ENCODE measurements at regions of chr5 and their contacts with region 1.

Region 1: DNA sequence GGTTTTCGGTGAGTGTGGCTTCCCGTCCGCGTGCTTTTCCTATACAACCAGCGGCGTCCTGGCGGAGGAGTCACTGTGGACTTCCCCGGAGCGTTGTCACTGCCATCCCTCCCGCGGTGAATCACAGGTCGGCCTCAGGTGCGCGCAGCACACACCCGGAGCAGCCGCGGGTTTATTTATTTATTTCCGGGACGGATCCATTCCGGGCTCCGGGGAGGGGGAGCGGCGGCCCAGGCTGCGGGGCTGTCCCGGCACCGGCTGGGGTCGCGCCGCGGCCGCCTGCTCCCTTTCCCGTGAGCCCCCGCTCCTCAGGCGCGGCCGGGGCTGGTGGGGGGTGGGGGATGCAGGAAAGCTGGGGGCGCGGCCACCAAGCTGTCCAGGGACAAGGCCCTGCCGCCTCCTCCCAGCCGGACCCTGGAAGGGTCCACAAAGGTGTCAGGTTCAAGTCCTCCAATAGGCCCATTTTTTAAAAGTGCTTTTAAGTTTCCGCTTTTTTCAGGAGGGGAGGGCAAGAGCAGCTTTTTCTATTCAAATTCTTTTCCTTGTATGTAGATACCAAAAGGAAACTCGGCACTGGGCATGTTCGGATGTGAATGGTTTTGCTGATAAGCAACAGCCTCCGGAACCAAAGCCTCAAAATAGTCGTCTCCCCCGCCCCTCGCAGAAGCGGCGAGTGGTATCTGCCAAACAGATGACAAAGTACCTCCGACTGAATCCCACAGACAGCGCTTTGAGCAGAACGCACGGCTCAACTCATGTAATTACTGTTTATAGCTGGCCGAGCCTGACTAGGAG is 192.5 kb downstream of the CD180 start:
- DNase-seq: peak; percentile 87 to 88
- H3K4me3 ChIP-seq: peak overlapping the region; percentile 60 to 75 (median 72)
- H3K27ac ChIP-seq: peak overlapping the region; percentile 92 to 94
- H3K4me1 ChIP-seq: no peaks in the 10 kb centered on the region
- H3K27me3 ChIP-seq: no peaks in the 10 kb centered on the region
- CTCF ChIP-seq: no peak
- POLR2A ChIP-seq: peak; percentile 28

Region 2: GRCh38 chr5:67015541-67016191 is 11.5 kb after region 1 on chr5:
- intact Hi-C with region 1: no loop called
- DNase-seq: no peak
- H3K4me3 ChIP-seq: peak overlapping the region; percentile 30 to 61 (median 39)
- H3K27ac ChIP-seq: peak overlapping the region; percentile 84 to 87
- H3K4me1 ChIP-seq: no peaks in the 10 kb centered on the region
- H3K27me3 ChIP-seq: no peaks in the 10 kb centered on the region
- CTCF ChIP-seq: no peak
- POLR2A ChIP-seq: no peak

Region 3: DNA sequence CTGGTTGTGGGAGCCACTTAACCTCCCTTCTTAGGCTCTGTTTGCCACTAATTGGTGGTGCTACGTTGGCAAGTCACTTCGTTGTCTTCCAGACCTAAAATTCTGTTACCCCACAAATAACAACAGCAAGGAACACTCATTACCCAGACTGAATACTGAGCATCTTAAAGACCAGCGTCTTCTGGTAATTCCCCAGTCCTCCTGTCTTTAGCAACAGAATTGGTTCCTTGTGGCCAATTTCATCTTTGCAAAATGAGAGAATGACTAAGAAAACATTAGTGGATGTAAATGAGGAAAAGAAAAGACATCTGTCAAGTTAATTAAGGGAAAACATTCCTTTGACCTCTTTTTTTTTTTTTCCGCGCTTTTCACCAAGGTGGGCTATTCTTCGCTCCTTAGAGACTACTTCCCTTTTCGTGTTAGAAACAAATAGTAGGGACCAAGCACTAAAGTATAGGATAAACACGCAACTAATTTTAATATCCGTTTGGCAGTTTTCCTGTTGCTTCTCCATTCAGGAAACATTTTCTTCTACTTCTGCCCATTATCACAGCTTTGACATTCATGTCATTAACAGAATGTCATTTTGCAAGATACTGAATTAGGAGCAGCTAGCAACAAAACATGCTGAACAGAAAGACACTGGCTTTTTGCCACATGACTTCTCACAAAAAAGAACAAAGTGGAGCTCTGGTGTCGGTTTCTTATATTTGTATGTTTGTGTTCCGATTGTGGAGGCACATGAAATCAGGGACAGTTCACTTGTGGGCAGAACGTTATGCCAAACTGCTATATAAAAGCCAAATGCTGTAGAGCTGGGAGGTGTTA is 38.3 kb after region 1 on chr5:
- intact Hi-C with region 1: loop called (anchors 2 kb)
- DNase-seq: no peak
- H3K4me3 ChIP-seq: no peak overlapping the region
- H3K27ac ChIP-seq: no peak overlapping the region
- H3K4me1 ChIP-seq: no peaks in the 10 kb centered on the region
- H3K27me3 ChIP-seq: no peaks in the 10 kb centered on the region
- CTCF ChIP-seq: no peak
- POLR2A ChIP-seq: no peak

Region 4: DNA sequence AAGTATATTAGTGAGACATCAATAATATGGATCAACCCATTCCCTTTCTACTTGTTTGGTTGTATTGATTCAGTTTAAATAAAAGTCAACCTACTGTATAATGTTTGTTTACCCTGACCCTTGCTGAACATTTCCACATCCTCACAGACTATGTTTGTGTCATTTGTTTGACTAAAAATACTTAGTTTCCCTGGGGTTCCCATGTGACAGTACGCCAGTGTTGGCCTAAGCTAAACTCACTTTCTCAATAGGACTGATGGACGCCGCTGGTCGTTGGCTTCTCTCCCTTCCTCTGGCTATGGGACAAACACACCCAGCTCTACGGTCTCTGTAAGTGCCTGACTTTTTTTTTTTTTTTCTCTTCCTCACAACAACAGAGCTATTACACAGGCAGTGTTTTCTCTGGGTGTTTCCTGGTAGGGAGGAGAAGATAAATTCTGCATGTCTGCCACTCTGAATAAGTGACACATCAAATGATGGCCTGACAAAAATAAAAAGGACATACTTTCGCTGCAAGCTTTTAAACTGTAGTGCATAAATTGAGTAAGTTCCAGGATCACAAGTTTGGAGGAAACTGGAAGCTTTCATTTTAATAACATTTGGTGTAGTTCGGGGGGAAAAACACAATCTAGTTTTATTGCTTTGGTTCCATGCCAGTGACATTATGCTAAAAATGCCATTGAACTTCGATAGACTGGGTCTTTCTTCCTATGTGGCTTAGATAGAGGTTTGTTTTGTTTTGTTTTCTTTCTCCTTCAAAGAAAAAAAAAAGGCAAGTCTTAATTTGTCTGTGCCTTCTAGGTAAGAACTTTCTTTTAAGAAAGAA is 91.4 kb after region 1 on chr5:
- intact Hi-C with region 1: loop called (anchors 10 kb)
- DNase-seq: peak; percentile 62 to 67
- H3K4me3 ChIP-seq: peak overlapping the region; percentile 14 to 42 (median 23)
- H3K27ac ChIP-seq: peak overlapping the region; percentile 70 to 89
- H3K4me1 ChIP-seq: peaks cover 6 to 8% of the 10 kb centered on the region in 2 donors
- H3K27me3 ChIP-seq: no peaks in the 10 kb centered on the region
- CTCF ChIP-seq: no peak
- POLR2A ChIP-seq: no peak